OCI-LY7 (cell line): ENCODE measurements at regions of chr6 and their contacts with region 1.

Region 1: DNA sequence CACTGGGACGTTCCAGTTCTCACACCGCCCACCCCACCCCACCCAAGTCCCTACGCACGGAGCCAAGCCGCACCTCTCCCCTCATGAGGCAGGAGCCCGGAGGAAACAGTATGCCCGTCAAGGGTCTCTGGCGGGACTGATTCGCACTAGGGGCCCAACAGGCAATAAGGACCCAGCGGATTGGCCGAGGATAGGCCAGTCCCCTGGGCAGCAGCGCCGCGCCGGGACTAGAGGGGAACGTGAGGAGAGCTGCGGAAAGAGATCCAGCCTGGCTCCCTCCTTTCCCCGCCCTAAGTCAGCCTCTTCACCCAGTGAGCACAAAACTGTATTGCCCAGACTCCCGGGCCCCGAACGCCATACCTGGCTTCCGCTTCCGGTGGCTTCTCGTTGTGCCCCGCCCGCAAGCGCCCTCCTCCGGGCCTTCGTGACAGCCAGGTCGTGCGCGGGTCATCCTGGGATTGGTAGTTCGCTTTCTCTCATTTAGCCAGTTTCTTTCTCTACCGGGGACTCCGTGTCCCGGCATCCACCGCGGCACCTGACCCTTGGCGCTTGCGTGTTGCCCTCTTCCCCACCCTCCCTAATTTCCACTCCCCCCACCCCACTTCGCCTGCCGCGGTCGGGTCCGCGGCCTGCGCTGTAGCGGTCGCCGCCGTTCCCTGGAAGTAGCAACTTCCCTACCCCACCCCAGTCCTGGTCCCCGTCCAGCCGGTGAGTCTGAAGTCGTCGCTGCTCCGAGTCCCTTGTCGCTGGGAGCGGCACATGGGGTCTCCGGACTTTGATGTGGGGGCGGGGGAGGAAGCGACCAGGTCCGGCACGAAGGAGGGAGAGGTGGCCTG is at the start of gene CSNK2B:
- DNase-seq: peak; percentile 98
- H3K4me3 ChIP-seq: peak within 1 kb of the TSS; percentile 99
- H3K27ac ChIP-seq: peak within 1 kb of the TSS; percentile 90
- H3K4me1 ChIP-seq: peaks cover 43% of the 10 kb centered on the region
- CTCF ChIP-seq: no peak
- total RNA-seq, gene CSNK2B: 207 and 230 TPM in 2 replicates

Region 2: DNA sequence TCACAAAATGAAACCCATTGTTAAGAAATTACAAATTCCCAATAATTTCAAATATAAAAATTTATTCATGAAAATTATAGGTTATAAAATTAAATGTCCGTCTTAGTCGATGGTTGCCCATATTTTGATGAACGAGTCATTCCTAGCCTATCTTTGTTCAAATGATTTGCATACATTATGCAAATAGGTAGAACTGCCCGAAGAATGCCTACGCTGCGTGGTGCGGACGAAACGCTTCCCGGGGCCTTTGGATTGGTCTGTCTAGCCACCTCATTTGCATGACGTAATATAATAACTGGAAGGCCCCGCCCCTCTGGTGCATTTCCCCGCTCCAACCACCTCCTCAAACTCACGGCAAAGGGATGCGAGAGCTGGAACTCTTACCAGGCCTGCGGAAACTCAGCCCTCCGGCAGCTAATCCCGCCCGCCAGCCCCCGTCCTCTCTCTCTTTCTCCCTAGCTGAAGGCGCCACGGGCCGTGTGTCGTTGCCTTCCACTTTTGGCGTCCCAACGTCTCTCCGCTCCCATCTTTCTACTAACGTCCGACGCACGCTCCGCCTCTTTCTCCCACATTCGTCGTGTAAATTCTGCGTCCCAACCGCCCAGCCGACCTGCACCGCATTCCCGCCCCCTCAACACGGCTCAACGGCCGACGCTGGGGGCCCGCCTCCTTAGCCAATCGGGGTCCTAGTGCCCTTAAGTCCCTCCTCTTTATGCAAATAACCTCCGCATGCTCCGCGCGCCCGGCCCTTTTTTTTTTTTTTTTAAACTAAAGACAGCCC is 45.7 kb before region 1 on chr6:
- CTCF ChIA-PET with region 1: no interaction called
- POLR2A ChIA-PET with region 1: no interaction called
- intact Hi-C with region 1: loop called (anchors 1 kb)
- DNase-seq: peak; percentile 99
- H3K4me3 ChIP-seq: peak overlapping the region; percentile 83
- H3K27ac ChIP-seq: peak overlapping the region; percentile 94
- H3K4me1 ChIP-seq: peaks cover 42% of the 10 kb centered on the region
- CTCF ChIP-seq: no peak

Region 3: DNA sequence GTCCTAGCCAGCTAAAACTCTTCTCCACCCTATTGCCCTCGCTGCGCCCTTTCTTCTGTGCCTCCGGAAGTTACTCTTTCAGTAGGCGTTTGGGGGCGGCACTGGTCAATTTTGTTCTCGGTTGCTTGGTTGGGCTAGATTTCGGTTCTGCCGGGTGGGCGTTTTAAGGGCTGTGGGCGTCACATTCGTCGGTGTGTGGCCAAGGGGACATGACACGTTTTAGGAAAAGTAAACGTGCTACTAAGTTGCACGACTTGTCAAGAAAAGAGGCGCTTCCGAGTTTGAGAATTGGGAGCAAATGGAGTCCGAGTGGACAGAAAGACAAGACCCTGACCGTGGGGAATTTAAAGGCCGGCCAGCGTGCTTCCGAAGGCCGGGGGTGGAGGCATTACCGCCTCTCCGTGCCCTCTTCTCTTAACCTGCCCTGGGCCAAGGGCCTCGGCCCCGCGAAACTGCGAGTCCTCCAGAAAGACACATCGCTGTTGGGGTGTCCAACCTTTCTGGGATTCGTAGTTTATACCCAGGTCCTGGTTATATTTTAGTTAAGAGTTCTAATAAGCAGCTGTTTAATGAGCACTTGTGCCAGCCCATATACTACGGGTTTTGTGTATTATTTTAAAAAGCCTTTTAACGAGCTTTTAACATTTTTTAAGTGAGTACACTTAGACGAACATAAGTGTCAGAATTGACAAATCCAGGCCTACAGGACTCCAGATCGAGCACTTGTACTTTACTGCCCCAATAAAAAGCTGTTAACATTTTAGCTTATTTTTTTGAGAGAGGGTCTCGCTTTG is 12.6 kb before region 1 on chr6:
- CTCF ChIA-PET with region 1: no interaction called
- POLR2A ChIA-PET with region 1: interaction called, 10 read pairs
- intact Hi-C with region 1: loop called (anchors 1 kb)
- DNase-seq: peak; percentile 97
- H3K4me3 ChIP-seq: peak overlapping the region; percentile 76
- H3K27ac ChIP-seq: peak overlapping the region; percentile 75
- H3K4me1 ChIP-seq: peaks cover 19% of the 10 kb centered on the region
- CTCF ChIP-seq: peak; percentile 59

Region 4: DNA sequence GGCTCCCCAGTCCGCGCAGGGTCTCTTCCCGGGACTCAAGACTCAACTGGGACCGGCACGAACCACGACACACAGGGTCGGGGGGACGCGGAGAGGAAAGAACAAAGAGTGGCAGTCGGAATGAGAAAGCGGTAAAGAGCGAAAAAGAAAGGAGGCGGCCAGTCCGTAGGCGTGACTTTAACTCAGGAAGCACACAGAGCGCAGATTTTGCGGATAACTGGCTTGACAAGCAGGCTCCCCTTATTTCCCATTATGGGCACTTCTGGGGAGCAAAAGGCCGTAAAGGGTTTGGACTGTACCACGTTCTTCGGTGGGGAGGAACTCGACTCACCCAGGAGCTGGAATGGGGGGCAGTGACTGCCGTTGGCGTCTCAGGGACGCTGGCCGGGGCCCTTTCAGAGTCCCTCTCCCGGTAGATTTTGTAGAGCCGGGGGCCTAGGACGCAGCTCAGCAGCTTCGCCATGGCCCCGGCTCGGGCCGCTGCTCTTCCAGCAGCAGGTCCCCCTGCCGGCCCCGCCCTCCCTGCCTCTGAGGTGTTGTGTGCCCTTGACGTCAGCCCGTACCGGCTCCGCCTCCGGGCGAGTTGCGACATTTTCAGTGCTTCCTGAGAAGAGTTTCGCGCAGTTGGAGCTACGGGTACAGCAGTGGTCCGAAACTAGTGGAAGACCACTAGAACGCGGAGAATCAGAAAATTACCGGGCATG is 37.3 kb after region 1 on chr6 and contains the start of gene ABHD16A:
- CTCF ChIA-PET with region 1: no interaction called
- POLR2A ChIA-PET with region 1: interaction called, 3 read pairs
- intact Hi-C with region 1: loop called (anchors 1 kb)
- DNase-seq: peak; percentile 99
- H3K4me3 ChIP-seq: peak within 1 kb of the TSS; percentile 78
- H3K27ac ChIP-seq: peak within 1 kb of the TSS; percentile 74
- H3K4me1 ChIP-seq: peaks cover 20% of the 10 kb centered on the region
- CTCF ChIP-seq: no peak
- total RNA-seq, gene ABHD16A: 28.6 and 34.8 TPM in 2 replicates

Region 5: DNA sequence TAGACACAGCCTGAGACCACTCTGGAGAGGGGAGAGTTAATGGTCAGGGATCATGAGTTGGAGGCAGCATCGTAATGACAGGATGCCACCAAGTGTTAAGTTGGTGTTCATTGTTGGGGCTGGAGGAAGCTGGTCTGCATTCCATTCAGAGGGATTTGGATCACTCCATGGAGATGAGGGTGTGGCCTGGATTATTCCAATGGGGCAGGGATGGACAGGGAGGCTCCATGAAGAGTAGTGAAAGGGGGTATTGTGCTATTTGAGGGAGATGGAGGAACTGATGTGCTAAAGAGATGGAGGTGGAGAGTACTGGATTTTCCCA is 97.9 kb after region 1 on chr6:
- CTCF ChIA-PET with region 1: no interaction called
- POLR2A ChIA-PET with region 1: no interaction called
- intact Hi-C with region 1: no loop called
- DNase-seq: no peak
- H3K4me3 ChIP-seq: no peak overlapping the region
- H3K27ac ChIP-seq: no peak overlapping the region
- H3K4me1 ChIP-seq: no peaks in the 10 kb centered on the region
- CTCF ChIP-seq: no peak

Region 6: GRCh38 chr6:31795616-31796298 is 130.0 kb after region 1 on chr6 and contains the start of gene VARS1:
- CTCF ChIA-PET with region 1: no interaction called
- POLR2A ChIA-PET with region 1: no interaction called
- intact Hi-C with region 1: loop called (anchors 1 kb)
- DNase-seq: peak; percentile 92
- H3K4me3 ChIP-seq: peak within 1 kb of the TSS; percentile 90
- H3K27ac ChIP-seq: peak within 1 kb of the TSS; percentile 71
- H3K4me1 ChIP-seq: peaks cover 49% of the 10 kb centered on the region
- CTCF ChIP-seq: peak; percentile 74
- total RNA-seq, gene VARS1: 47.0 and 51.2 TPM in 2 replicates